Endothelial cell of umbilical vein (primary cell): ENCODE measurements at regions of chr1 and their contacts with region 1.

Region 1: GRCh38 chr1:87292684-87293493 is 35.8 kb upstream of the LMO4 start:
- DNase-seq: peak; percentile 66
- H3K4me3 ChIP-seq: no peak overlapping the region
- H3K27ac ChIP-seq: no peak overlapping the region
- H3K4me1 ChIP-seq: no peaks in the 10 kb centered on the region
- H3K27me3 ChIP-seq: peaks cover 0 to 7% of the 10 kb centered on the region in 2 experiments
- CTCF ChIP-seq: peak; percentile 40 to 67
- POLR2A ChIP-seq: no peak

Region 2: GRCh38 chr1:86981482-86982213 is 311.2 kb before region 1 on chr1:
- CTCF ChIA-PET with region 1: no interaction called
- POLR2A ChIA-PET with region 1: no interaction called
- dilution Hi-C with region 1: no loop called
- intact Hi-C with region 1: no loop called
- DNase-seq: no peak
- H3K4me3 ChIP-seq: no peak overlapping the region
- H3K27ac ChIP-seq: no peak overlapping the region
- H3K4me1 ChIP-seq: no peaks in the 10 kb centered on the region
- H3K27me3 ChIP-seq: no peaks in the 10 kb centered on the region
- CTCF ChIP-seq: no peak
- POLR2A ChIP-seq: no peak

Region 3: GRCh38 chr1:87115317-87115890 is 177.5 kb before region 1 on chr1:
- CTCF ChIA-PET with region 1: no interaction called
- POLR2A ChIA-PET with region 1: no interaction called
- dilution Hi-C with region 1: no loop called
- intact Hi-C with region 1: no loop called
- DNase-seq: no peak
- H3K4me3 ChIP-seq: no peak overlapping the region
- H3K27ac ChIP-seq: no peak overlapping the region
- H3K4me1 ChIP-seq: no peaks in the 10 kb centered on the region
- H3K27me3 ChIP-seq: no peaks in the 10 kb centered on the region
- CTCF ChIP-seq: no peak
- POLR2A ChIP-seq: no peak

Region 4: GRCh38 chr1:87151500-87152421 is 141.1 kb before region 1 on chr1:
- CTCF ChIA-PET with region 1: interaction called, 7 read pairs
- POLR2A ChIA-PET with region 1: no interaction called
- dilution Hi-C with region 1: no loop called
- intact Hi-C with region 1: loop called (anchors 1 kb)
- DNase-seq: peak; percentile 64
- H3K4me3 ChIP-seq: peak overlapping the region in 2 of 3 experiments; percentile 0 to 46
- H3K27ac ChIP-seq: no peak overlapping the region
- H3K4me1 ChIP-seq: peaks cover 19% of the 10 kb centered on the region
- H3K27me3 ChIP-seq: peaks cover 9 to 15% of the 10 kb centered on the region in 2 experiments
- CTCF ChIP-seq: peak; percentile 52 to 62
- POLR2A ChIP-seq: no peak

Region 5: GRCh38 chr1:87279966-87280535 is 12.8 kb before region 1 on chr1:
- CTCF ChIA-PET with region 1: interaction called, 20 read pairs
- POLR2A ChIA-PET with region 1: no interaction called
- dilution Hi-C with region 1: no loop called
- intact Hi-C with region 1: no loop called
- DNase-seq: no peak
- H3K4me3 ChIP-seq: no peak overlapping the region
- H3K27ac ChIP-seq: no peak overlapping the region
- H3K4me1 ChIP-seq: no peaks in the 10 kb centered on the region
- H3K27me3 ChIP-seq: peaks cover 0 to 2% of the 10 kb centered on the region in 2 experiments
- CTCF ChIP-seq: no peak
- POLR2A ChIP-seq: no peak

Region 6: DNA sequence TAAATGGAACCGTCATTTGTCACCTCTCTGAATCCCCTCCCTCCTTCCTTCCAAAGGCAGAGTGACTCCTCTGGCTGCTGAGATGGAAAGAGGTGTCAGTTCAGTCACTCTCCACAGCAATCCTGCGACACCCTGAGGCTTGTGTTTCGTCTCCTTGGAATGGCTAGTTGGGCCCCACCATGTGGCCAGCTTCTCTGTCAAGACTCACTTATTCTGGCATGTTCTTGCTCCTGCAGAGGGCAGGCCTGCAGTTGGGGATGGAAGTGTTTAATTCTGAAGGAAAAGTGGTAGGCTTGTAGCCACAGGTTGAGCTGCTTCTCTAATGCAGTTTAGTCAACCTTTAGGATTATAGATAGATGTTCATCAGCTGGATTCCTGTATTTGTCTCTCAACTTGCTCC is 185.3 kb after region 1 on chr1:
- CTCF ChIA-PET with region 1: no interaction called
- POLR2A ChIA-PET with region 1: no interaction called
- dilution Hi-C with region 1: no loop called
- intact Hi-C with region 1: no loop called
- DNase-seq: no peak
- H3K4me3 ChIP-seq: no peak overlapping the region
- H3K27ac ChIP-seq: no peak overlapping the region
- H3K4me1 ChIP-seq: peaks cover 9% of the 10 kb centered on the region
- H3K27me3 ChIP-seq: no peaks in the 10 kb centered on the region
- CTCF ChIP-seq: no peak
- POLR2A ChIP-seq: no peak

Region 7: GRCh38 chr1:87953732-87954344 is 660.9 kb after region 1 on chr1:
- CTCF ChIA-PET with region 1: interaction called, 37 read pairs
- POLR2A ChIA-PET with region 1: no interaction called
- dilution Hi-C with region 1: no loop called
- intact Hi-C with region 1: loop called (anchors 1 kb)
- DNase-seq: peak; percentile 71
- H3K4me3 ChIP-seq: no peak overlapping the region
- H3K27ac ChIP-seq: no peak overlapping the region
- H3K4me1 ChIP-seq: peaks cover 3% of the 10 kb centered on the region
- H3K27me3 ChIP-seq: no peaks in the 10 kb centered on the region
- CTCF ChIP-seq: peak; percentile 81 to 87
- POLR2A ChIP-seq: no peak

Region 8: DNA sequence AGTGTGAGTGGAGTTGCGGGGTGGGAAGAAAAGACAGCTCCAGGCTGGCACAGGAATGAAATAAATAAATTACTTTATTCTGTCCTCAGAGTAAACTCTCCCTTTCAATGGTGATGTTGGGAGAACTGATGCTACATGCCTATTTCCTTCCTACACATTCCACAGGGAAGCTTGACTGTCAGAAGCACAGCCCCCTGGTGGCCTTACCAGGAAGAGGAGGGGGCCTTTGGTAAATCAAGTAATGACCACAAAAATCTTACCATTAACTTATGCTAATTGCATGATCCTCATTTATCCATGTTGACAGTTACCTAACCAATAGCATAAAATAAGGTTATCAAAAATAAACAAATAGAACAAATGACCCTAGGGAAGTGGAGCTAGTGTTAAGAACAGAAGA is 786.1 kb after region 1 on chr1:
- CTCF ChIA-PET with region 1: interaction called, 4 read pairs
- POLR2A ChIA-PET with region 1: no interaction called
- dilution Hi-C with region 1: no loop called
- intact Hi-C with region 1: loop called (anchors 1 kb)
- DNase-seq: peak; percentile 8
- H3K4me3 ChIP-seq: no peak overlapping the region
- H3K27ac ChIP-seq: no peak overlapping the region
- H3K4me1 ChIP-seq: no peaks in the 10 kb centered on the region
- H3K27me3 ChIP-seq: peaks cover 0 to 1% of the 10 kb centered on the region in 2 experiments
- CTCF ChIP-seq: peak; percentile 39 to 44
- POLR2A ChIP-seq: no peak

Region 9: DNA sequence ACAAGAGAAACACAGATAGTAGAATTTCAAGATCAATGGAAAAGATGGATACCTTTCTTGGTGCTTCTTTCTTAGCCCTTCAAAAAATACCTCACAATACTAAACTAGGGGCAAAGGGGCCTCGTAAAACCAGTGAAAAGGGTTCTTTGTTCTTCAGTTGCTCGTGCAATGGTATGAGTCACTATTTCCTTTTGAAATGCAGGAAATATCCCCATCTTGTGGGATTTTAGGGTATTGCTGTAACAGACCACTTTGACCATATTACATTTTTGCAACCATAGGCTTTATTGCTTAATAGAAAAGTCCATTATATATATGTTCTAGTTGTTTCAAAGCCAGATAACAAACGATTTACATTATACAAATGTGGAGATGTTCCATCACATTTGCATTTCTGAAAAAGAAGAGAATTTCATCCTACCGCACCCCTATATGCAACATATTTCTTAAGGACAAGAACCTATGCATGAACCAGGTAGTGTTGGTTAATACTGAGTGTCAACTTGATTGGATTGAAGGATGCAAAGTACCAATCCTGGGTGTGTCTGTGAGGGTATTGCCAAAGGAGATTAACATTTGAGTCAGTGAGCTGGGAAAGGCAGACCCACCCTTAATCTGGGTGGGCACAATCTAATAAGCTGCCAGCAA is 1302.6 kb after region 1 on chr1:
- CTCF ChIA-PET with region 1: no interaction called
- POLR2A ChIA-PET with region 1: no interaction called
- dilution Hi-C with region 1: no loop called
- intact Hi-C with region 1: loop called (anchors 10 kb)
- DNase-seq: peak; percentile 63
- H3K4me3 ChIP-seq: no peak overlapping the region
- H3K27ac ChIP-seq: no peak overlapping the region
- H3K4me1 ChIP-seq: no peaks in the 10 kb centered on the region
- H3K27me3 ChIP-seq: no peaks in the 10 kb centered on the region
- CTCF ChIP-seq: peak; percentile 26 to 39
- POLR2A ChIP-seq: no peak